OCI-LY7 (cell line): ENCODE measurements at regions of chr12 and their contacts with region 1.

Region 1: GRCh38 chr12:125346362-125346761 is 281.1 kb downstream of the AACS start:
- DNase-seq: peak; percentile 87
- H3K4me3 ChIP-seq: peak overlapping the region; percentile 45
- H3K27ac ChIP-seq: peak overlapping the region; percentile 45
- H3K4me1 ChIP-seq: peaks cover 31% of the 10 kb centered on the region
- CTCF ChIP-seq: peak; percentile 84

Region 2: GRCh38 chr12:125245581-125246557 is 100.5 kb before region 1 on chr12:
- CTCF ChIA-PET with region 1: no interaction called
- POLR2A ChIA-PET with region 1: no interaction called
- intact Hi-C with region 1: loop called (anchors 5 kb)
- DNase-seq: no peak
- H3K4me3 ChIP-seq: no peak overlapping the region
- H3K27ac ChIP-seq: no peak overlapping the region
- H3K4me1 ChIP-seq: peaks cover 35% of the 10 kb centered on the region
- CTCF ChIP-seq: no peak

Region 3: GRCh38 chr12:125402874-125403789 is 56.8 kb after region 1 on chr12:
- CTCF ChIA-PET with region 1: interaction called, 4 read pairs
- POLR2A ChIA-PET with region 1: no interaction called
- intact Hi-C with region 1: loop called (anchors 1 kb)
- DNase-seq: peak; percentile 81
- H3K4me3 ChIP-seq: no peak overlapping the region
- H3K27ac ChIP-seq: no peak overlapping the region
- H3K4me1 ChIP-seq: peaks cover 44% of the 10 kb centered on the region
- CTCF ChIP-seq: peak; percentile 95

Region 4: DNA sequence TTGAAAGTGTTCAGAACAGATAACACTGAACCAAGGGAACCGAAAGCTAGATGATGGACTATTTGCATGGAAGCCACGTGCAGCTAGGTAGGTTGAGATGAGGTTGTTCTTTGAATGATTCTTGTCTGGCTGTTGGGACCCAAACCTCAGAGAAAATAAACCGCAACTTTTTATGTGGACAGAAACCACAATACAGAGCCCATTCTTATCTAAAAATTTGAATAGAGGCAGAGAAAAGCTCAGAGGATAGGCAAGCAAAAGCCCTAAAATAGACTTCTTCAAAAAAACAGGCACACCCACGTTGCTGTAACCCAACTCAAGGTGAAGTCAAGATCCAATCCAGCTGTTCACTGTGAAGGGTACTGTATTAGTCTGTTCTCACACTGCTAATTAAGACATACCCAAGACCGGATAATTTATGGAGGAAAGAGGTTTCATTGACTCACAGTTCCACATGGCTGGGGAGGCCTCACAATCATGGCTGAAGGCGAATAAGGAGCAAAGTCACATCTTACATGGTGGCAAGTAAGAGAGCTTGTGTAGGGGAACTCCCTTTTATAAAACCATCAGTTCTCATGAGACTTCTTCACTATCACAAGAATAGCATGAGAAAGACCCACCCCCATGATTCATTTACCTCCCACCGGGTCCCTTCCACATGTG is 72.7 kb after region 1 on chr12:
- CTCF ChIA-PET with region 1: no interaction called
- POLR2A ChIA-PET with region 1: no interaction called
- intact Hi-C with region 1: no loop called
- DNase-seq: peak; percentile 77
- H3K4me3 ChIP-seq: peak overlapping the region; percentile 8
- H3K27ac ChIP-seq: peak overlapping the region; percentile 81
- H3K4me1 ChIP-seq: peaks cover 27% of the 10 kb centered on the region
- CTCF ChIP-seq: no peak

Region 5: DNA sequence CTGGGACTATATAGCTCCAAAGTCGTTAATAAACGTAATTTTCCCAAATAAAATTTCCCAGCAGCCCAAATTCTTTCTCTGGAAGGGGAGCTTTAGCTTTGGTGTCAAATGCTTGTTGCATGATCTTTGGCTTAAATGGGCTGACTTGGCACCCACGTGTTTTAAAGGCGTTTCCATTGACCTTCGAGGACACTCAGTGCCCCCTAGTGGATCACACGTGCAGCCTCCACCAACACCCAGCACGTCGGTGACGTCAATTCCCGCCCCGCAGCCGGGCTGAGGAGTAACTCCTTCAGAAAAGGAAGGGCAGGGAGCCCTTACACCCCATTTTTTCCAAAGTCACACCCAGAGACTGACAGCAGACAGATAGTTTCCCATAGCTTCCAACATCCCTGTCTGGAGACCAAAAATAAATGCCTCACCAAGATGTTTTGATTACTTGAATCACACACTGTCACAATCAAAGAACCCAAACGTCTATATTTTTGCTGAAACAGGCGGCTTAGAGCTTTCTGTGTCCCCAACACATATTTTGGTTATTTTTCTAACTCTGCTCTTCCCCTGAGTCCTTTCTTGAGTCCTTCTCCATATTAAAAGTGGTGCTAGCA is 426.8 kb after region 1 on chr12:
- CTCF ChIA-PET with region 1: no interaction called
- POLR2A ChIA-PET with region 1: no interaction called
- intact Hi-C with region 1: loop called (anchors 5 kb)
- DNase-seq: peak; percentile 77
- H3K4me3 ChIP-seq: no peak overlapping the region
- H3K27ac ChIP-seq: no peak overlapping the region
- H3K4me1 ChIP-seq: no peaks in the 10 kb centered on the region
- CTCF ChIP-seq: peak; percentile 89

Region 6: GRCh38 chr12:125902981-125903380 is 556.6 kb after region 1 on chr12:
- CTCF ChIA-PET with region 1: no interaction called
- POLR2A ChIA-PET with region 1: no interaction called
- intact Hi-C with region 1: no loop called
- DNase-seq: no peak
- H3K4me3 ChIP-seq: no peak overlapping the region
- H3K27ac ChIP-seq: no peak overlapping the region
- H3K4me1 ChIP-seq: no peaks in the 10 kb centered on the region
- CTCF ChIP-seq: no peak